CD4-positive, alpha-beta T cell (primary cell): ENCODE measurements at regions of chr2 and their contacts with region 1.

Region 1: GRCh38 chr2:26139269-26140183 is 33.4 kb upstream of the GAREM2 start:
- DNase-seq: no peak
- ATAC-seq: no peak
- H3K4me3 ChIP-seq: no peak overlapping the region
- H3K4me3 Mint-ChIP-seq: no peak overlapping the region
- H3K27ac ChIP-seq: no peak overlapping the region
- H3K27ac Mint-ChIP-seq: no peak overlapping the region
- H3K4me1 ChIP-seq: no peaks in the 10 kb centered on the region
- H3K4me1 Mint-ChIP-seq: no peaks in the 10 kb centered on the region
- H3K27me3 ChIP-seq: no peaks in the 10 kb centered on the region
- H3K27me3 Mint-ChIP-seq: no peaks in the 10 kb centered on the region
- CTCF ChIP-seq: no peak

Region 2: DNA sequence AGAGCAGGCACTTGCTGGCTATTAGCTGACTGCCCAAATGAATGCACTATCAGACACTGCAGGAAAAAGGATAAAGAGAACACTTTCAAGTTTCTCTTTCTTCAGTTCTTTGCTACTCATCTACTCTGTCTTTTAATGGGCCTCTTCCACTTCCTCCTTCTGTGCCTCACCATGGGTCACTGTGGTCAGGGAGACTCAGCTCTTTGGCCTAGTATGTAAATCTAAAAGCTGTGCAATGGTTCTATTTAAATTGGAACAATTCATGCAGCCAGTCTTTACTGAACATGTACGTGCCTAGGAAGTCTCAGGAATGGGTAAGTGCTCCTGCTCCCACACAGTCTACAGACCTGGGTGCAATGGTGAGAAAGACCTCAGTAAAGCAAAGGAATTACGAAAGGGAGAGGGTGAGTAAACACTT is 718.7 kb before region 1 on chr2:
- CTCF ChIA-PET with region 1: no interaction called
- POLR2A ChIA-PET with region 1: no interaction called
- intact Hi-C with region 1: loop called in 1 of 2 experiments (anchors 10 kb)
- DNase-seq: peak in 2 of 14 experiments; percentile 17 to 20
- ATAC-seq: no peak
- H3K4me3 ChIP-seq: no peak overlapping the region
- H3K4me3 Mint-ChIP-seq: no peak overlapping the region
- H3K27ac ChIP-seq: no peak overlapping the region
- H3K27ac Mint-ChIP-seq: no peak overlapping the region
- H3K4me1 ChIP-seq: no peaks in the 10 kb centered on the region
- H3K4me1 Mint-ChIP-seq: no peaks in the 10 kb centered on the region
- H3K27me3 ChIP-seq: no peaks in the 10 kb centered on the region
- H3K27me3 Mint-ChIP-seq: no peaks in the 10 kb centered on the region
- CTCF ChIP-seq: no peak